Aorta (tissue), 5 donors: ENCODE measurements at regions of chr3 and their contacts with region 1.

Region 1: DNA sequence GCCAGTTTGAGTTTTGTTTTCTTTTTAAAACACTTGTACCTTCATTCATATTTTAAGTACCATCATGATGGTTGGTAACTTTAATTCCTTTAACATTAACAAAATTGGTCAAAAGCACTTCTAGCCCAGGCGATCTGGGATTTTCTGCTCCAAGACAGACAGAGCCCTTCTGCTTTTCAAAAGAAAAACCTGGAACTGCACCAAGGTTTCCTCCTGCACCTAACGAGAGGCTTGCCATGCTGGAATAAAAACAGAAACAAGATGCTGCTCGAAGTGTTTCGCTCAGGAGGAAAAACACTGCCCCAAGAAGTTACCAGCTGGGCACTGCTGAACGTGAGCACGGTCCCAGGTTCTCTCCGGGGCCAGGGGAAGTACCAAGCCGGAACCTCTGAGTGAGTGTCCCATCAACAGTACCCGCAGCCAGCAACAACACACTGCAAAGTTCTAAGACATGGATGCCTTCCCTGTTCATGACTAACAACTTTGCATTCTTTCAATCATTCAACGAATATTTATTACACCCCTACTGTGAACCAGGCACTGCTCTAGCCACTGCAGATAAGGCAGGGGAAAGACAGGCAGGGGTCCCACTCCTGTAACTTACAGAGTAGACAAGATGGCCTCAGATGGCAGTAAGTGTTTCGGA is 98.8 kb downstream of the XXYLT1 start:
- DNase-seq: peak in 1 of 2 donors; percentile 82
- ATAC-seq: peak; percentile 77
- H3K4me3 ChIP-seq: no peak overlapping the region
- H3K27ac ChIP-seq: no peak overlapping the region
- H3K4me1 ChIP-seq: peaks cover 0 to 9% of the 10 kb centered on the region in 2 donors
- H3K27me3 ChIP-seq: no peaks in the 10 kb centered on the region

Region 2: DNA sequence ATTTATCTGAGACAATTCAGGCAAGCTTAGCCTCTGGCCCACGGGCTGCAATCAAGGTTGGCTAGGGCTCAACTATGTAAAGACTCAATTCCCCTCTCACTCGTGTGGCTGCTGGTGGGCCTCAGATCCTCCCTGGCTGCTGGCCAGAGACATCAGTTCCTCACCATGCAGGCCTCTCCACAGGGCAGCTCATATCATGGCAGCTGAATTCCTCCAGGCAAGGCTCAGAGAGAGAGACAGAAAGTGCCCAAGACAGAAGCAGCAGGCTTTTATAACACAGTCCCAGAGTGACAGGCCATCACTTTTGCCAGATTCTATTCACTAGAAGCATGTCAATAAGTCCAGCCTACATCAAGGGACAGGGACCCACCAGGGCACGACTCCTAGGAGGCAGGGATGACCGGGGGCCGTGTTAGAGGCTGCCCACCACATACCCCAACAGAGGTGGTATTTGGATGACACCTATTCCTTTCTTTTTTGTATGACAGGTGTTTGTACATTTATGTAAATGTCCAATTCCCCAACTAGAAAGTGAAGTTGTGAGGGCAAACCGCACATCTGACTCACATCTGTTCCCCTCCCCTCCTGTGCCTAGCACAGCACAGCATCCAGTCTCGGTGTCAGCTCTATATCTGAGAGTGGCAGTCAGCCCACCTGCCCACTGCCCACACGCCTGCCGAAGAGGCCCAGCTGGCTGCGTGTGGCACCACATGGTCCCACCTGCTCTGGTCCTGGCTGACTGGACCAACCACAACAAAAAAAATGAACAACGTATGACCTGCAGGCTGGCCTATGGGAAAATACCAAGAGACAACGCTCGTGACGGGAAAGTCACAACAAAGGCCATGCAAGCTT is 35.8 kb after region 1 on chr3:
- intact Hi-C with region 1: no loop called
- DNase-seq: no peak
- ATAC-seq: no peak
- H3K4me3 ChIP-seq: no peak overlapping the region
- H3K27ac ChIP-seq: no peak overlapping the region
- H3K4me1 ChIP-seq: no peaks in the 10 kb centered on the region
- H3K27me3 ChIP-seq: no peaks in the 10 kb centered on the region

Region 3: DNA sequence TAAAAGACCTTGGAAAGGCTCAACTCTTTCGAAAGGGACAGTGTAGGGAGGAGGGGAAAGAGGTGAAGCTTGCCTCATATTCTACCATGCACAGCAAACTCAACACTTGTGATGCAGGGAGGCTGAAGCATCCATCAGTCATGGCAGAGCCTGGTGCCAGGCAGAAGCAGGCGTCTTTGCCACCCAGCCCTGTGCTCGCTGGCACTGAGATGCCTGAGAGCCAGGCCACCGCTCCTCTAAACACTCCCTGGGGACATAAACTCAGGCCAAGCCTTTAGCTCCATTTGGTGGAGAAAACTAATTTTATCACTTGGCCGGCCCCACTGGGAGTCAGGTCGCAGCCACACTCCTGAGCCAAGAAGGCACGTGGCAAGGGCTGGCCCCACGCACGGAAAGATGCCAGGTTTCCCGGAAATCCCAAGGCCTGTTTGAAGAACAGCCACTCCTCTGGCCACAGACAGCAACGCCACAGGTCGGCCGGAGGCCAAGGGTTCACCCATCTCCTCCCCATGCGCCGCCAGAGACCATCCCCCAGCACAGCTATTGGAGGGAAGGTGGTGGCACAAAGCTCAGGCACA is 68.1 kb after region 1 on chr3:
- intact Hi-C with region 1: loop called in 1 of 2 experiments (anchors 5 kb)
- DNase-seq: peak; percentile 78 to 87
- ATAC-seq: peak; percentile 87
- H3K4me3 ChIP-seq: no peak overlapping the region
- H3K27ac ChIP-seq: peak overlapping the region in 1 of 2 donors; percentile 48
- H3K4me1 ChIP-seq: no peaks in the 10 kb centered on the region
- H3K27me3 ChIP-seq: no peaks in the 10 kb centered on the region

Region 4: GRCh38 chr3:195372220-195372619 is 200.1 kb after region 1 on chr3:
- intact Hi-C with region 1: no loop called
- DNase-seq: no peak
- ATAC-seq: no peak
- H3K4me3 ChIP-seq: no peak overlapping the region
- H3K27ac ChIP-seq: no peak overlapping the region
- H3K4me1 ChIP-seq: no peaks in the 10 kb centered on the region
- H3K27me3 ChIP-seq: no peaks in the 10 kb centered on the region